PC-3 (cell line): ENCODE measurements at regions of chr5 and their contacts with region 1.

Region 1: DNA sequence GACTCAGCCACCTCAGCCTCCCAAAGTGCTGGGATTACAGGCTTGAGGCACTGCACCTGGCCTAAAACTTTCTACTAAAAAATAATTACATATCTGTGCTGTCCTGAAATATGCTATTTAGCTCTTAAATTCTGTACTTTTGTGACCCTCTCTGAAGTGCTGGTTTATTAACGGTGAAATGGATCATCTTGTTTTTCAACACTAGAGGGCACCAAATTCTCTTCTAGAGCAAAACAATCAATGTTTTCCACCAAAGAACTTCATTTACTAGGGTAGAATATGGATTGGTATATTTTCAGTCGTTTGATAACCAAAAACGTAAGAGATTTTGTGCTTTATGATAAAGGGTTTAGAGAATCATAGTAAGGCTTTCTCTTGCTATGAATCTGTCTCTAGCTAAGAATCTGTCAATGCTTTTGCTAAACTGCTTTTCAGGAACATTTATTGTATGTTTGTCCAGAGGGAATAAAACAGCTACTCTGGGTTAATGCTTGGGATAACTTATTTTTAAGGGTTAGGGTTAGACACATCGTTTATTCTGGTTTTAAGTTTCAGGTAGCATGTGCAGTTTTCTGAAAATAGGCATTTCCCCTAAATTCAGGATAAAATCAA is 63.6 kb downstream of the RNF180 start:
- DNase-seq: peak; percentile 76
- ATAC-seq: peak; percentile 70
- H3K4me3 ChIP-seq: no peak overlapping the region
- H3K27ac ChIP-seq: no peak overlapping the region
- H3K4me1 ChIP-seq: no peaks in the 10 kb centered on the region
- H3K27me3 ChIP-seq: no peaks in the 10 kb centered on the region
- CTCF ChIP-seq: peak; percentile 88

Region 2: DNA sequence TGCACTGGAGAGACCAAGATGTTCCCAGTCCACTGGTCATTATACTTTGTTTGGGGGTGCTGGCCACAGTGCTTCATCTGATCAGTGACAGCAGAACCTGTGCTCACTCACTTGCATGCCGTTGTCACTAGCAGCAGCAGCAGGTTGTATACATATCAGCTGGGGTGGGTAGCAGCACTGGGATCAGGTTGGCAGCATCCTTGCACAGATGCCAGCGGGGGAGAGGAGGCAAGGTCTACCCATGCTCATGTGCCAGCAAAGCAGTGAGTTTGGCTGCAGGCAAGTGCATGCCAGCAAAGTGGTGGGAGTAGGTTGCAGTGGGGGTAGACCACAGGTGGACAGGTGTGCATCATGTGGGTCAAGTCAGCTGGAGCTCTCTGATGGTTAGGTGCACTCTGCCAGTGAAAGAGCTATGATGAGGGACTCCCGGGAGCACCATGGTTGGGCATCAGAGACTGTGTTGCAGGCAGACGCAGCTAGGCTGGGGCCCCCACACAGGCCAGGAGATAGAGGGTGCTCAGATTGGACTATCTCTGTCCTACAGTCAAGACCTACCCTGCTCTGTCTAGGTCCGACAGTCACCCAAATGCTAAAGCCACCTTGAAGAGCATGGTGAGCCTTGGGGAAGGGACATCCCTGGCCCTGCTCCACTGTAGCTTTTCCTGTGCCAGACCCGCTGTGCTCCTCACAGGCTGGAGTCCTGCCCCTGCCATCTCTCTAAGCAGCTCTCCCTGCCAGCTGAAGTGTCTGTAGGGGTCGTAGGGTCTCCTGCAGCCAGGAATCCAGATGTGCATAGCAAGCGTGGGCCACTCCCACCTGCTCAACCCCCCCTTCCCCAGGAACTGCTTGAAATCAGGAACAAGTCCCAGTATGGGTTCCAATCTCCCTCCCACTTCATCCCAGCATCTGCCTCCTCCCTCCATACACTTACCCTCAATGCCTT is 56.2 kb after region 1 on chr5:
- CTCF ChIA-PET with region 1: no interaction called
- POLR2A ChIA-PET with region 1: no interaction called
- intact Hi-C with region 1: no loop called
- DNase-seq: no peak
- ATAC-seq: no peak
- H3K4me3 ChIP-seq: no peak overlapping the region
- H3K27ac ChIP-seq: no peak overlapping the region
- H3K4me1 ChIP-seq: no peaks in the 10 kb centered on the region
- H3K27me3 ChIP-seq: no peaks in the 10 kb centered on the region
- CTCF ChIP-seq: no peak

Region 3: GRCh38 chr5:64347309-64347708 is 118.0 kb after region 1 on chr5:
- CTCF ChIA-PET with region 1: interaction called, 7 read pairs
- POLR2A ChIA-PET with region 1: no interaction called
- intact Hi-C with region 1: loop called (anchors 5 kb)
- DNase-seq: peak; percentile 43
- ATAC-seq: peak; percentile 67
- H3K4me3 ChIP-seq: no peak overlapping the region
- H3K27ac ChIP-seq: no peak overlapping the region
- H3K4me1 ChIP-seq: no peaks in the 10 kb centered on the region
- H3K27me3 ChIP-seq: no peaks in the 10 kb centered on the region
- CTCF ChIP-seq: peak; percentile 49

Region 4: DNA sequence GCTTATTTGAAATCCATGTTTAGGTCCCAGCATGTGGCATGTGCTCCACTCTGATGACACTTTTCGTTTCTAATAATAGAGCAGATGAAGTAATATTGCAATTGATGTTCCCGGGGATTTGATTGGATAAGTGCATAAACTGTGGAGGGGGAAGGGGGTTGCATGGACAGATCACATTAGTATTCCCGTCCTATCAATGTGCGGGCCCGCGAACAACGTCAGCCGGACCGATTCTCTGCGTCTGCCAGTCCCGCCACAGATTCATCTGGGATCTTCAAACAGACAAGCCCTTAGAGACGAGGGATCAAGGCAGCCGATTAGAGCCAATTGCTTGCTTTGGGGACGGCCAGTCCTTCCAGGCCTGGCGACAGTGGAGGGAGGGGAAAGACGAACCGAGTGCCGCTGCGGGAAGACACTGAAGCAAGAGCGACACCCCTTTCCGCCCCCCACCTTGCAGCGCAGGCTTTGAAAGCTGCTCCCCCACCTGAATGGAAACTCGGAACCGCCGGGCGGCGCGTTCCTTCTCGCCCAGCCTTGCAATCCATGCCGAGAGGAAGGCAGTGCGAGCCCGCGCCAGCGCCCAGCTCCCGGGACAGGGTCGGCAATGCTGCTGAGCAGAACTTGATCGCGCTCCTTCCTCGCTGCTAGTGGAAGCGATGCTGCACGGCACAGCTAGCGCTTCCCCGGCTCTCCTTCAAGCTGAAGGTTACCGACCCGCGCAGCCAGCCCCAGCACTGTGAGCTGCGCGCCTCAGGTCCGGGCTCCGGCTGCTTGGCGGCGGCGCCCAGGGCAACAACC is 276.7 kb after region 1 on chr5 and contains the start of gene RGS7BP:
- CTCF ChIA-PET with region 1: interaction called, 3 read pairs
- POLR2A ChIA-PET with region 1: no interaction called
- intact Hi-C with region 1: loop called (anchors 5 kb)
- DNase-seq: peak; percentile 52
- ATAC-seq: peak; percentile 93
- H3K4me3 ChIP-seq: peak within 1 kb of the TSS; percentile 82
- H3K27ac ChIP-seq: no peak within 1 kb of the TSS
- H3K4me1 ChIP-seq: no peaks in the 10 kb centered on the region; the same call in 1 of the 2 replicates
- H3K27me3 ChIP-seq: no peaks in the 10 kb centered on the region
- CTCF ChIP-seq: no peak
- total RNA-seq, gene RGS7BP: 1.2 and 2.1 TPM in 2 replicates

Region 5: DNA sequence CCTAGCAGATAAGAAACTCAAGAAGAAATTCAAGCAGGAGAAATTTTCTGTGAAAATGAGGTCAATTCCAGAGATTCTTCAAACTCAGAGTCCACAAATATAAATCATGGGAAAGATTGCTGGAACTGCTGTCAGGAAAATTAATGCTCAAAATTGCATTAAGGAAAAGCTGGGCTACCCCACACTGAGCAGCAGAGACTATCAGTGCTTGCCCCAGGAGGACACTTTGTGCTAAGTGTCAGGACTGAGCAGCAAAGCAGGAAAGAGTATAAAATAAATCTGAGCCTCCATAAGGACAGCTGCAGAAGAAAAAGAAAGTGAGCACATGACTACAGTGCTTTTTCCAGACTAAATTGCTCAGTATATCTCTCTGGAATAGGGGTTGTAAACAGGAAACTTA is 358.1 kb after region 1 on chr5:
- CTCF ChIA-PET with region 1: no interaction called
- POLR2A ChIA-PET with region 1: no interaction called
- intact Hi-C with region 1: no loop called
- DNase-seq: no peak
- ATAC-seq: no peak
- H3K4me3 ChIP-seq: no peak overlapping the region
- H3K27ac ChIP-seq: no peak overlapping the region
- H3K4me1 ChIP-seq: no peaks in the 10 kb centered on the region
- H3K27me3 ChIP-seq: no peaks in the 10 kb centered on the region
- CTCF ChIP-seq: no peak

Region 6: GRCh38 chr5:64784451-64785025 is 555.3 kb after region 1 on chr5:
- CTCF ChIA-PET with region 1: no interaction called
- POLR2A ChIA-PET with region 1: no interaction called
- intact Hi-C with region 1: loop called (anchors 1 kb)
- DNase-seq: peak; percentile 75
- ATAC-seq: peak; percentile 58; the same call in 1 of the 2 replicates
- H3K4me3 ChIP-seq: no peak overlapping the region
- H3K27ac ChIP-seq: no peak overlapping the region
- H3K4me1 ChIP-seq: no peaks in the 10 kb centered on the region
- H3K27me3 ChIP-seq: no peaks in the 10 kb centered on the region
- CTCF ChIP-seq: peak; percentile 79